Left colon (tissue), 2 donors: ENCODE measurements at regions of chr5 and their contacts with region 1.

Region 1: DNA sequence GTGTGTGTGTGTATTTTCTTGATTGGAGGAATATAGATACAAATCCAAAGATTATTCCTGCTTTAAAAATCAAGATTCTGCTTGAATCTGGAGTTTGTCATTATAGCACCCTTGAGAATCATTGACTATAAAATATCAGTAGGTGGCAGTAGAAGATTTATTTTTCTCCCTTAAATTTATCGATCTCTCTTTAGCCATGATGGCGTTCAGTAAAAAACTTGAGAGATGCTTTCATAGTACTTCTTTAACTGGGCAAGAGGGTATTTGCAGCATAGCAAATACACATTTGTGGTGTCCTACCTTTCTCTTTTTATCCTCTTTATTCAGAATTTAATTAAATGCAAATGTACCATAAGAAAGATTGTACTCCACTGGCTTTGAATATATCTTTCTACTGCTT is 307.7 kb downstream of the ADGRV1 start:
- DNase-seq: no peak
- ATAC-seq: peak; percentile 72

Region 2: DNA sequence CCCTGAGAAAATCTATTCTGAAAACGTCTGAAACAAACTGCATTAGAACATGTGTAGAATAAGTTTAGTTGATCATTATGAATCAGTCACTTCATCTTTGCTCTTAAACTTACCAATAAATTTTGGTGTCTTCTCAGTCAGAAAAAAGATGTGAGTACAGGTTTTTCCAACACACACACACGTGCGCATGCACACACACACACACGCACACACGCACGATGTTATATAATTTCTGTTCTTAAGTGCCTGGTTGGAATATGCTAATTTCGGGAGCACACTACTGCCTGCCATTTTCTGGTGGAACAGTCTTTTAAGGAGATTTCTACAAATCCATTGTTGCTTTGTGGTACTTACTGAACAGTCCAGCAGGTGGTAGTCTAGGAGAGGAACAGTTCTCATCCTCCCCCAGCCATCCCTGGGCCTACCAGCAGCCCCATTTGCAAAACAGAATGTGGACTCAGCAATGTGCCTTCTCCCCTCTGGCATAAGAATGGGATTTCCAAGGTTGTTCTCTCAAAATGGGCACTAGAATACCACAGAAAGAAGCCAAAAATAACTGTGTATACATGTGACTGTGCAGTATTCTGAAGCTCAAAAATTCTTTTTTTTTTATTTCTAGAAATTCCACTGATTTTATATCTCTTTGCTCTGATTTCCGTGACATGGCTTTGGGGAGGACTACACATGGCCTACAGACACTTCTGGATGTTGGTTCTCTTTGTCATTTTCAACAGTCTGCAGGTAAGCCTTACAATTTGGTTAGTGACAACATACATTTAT is 235.5 kb after region 1 on chr5:
- intact Hi-C with region 1: loop called in 1 of 2 experiments (anchors 10 kb)
- DNase-seq: peak; percentile 66 to 68
- ATAC-seq: peak; percentile 92

Region 3: GRCh38 chr5:91419571-91420537 is 553.5 kb after region 1 on chr5:
- intact Hi-C with region 1: loop called in 1 of 2 experiments (anchors 5 kb)
- DNase-seq: peak; percentile 41 to 80
- ATAC-seq: peak; percentile 68